ENCODE measurements at regions of chr12 and their contacts with region 1.

Region 1: DNA sequence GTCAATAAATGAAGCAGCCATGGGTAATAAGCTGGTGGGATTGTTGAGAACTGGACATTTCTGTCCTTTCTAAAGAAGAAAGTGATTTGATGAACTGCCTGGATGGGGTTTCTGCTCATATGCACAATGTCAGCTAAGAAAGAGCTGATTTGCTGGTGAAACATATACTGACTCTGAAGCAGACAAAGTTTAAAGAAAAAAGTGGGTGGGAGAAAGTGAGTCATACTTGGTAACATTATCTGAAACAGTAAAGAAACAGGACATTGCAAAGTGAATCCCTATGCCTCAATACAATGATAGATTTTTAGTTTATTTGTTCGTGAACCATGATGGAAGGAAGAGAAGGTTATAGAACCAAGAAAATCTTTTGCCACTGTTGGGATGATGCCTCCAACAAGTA is 95.6 kb upstream of the DNM1L start:
- DNase-seq: no peak
- ATAC-seq: no peak
- H3K4me3 ChIP-seq: no peak overlapping the region
- H3K27ac ChIP-seq: no peak overlapping the region
- H3K4me1 ChIP-seq: peaks cover 0 to 38% (median 12%) of the 10 kb centered on the region in 9 donors
- H3K27me3 ChIP-seq: no peaks in the 10 kb centered on the region
- CTCF ChIP-seq: no peak

Region 2: DNA sequence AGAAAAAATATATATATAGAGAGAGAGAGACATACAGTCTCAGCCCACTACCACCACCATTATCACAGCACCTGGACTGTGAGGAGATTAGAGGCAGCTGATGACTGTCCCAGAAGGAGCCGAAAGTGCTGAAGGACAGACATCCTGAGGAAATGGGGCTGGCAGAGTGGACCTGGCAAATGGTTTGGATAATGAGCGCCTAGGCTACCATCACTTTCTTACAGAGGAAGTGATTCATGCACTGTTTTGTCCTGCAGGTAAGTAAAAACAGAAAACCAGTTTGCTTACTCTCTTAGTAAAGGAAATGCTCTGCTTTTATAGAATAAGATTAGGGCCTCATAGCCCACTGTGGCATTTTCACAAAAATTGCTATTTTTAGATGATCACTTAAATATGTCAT is 67.0 kb after region 1 on chr12:
- intact Hi-C with region 1: loop called in 1 of 10 experiments (anchors 5 kb)
- DNase-seq: no peak
- ATAC-seq: peak in 1 of 8 donors; percentile 41
- H3K4me3 ChIP-seq: no peak overlapping the region
- H3K27ac ChIP-seq: no peak overlapping the region
- H3K4me1 ChIP-seq: peaks cover 0 to 7% (median 0%) of the 10 kb centered on the region in 9 donors
- H3K27me3 ChIP-seq: no peaks in the 10 kb centered on the region
- CTCF ChIP-seq: no peak